ENCODE measurements at regions of chr17 and their contacts with region 1.

Region 1: DNA sequence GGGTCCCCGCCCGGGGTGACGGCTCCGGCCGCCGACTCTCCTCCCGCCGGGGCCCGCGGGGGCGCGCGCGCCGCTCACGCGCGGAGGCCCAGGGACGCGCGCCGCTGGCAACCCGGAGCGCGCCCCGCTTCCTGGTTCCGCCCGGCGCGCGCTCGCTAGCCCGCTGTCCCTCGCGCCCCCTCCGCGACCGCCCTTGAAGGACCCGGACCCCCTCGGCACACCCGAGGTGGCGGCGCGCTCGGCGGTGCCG is at the start of gene STAT5B:
- DNase-seq: peak; percentile 68
- ATAC-seq: peak; percentile 57; the same call in 1 of the 2 replicates
- H3K4me3 Mint-ChIP-seq: peak within 1 kb of the TSS; percentile 86
- H3K27ac Mint-ChIP-seq: peak within 1 kb of the TSS; percentile 72
- H3K4me1 Mint-ChIP-seq: peaks cover 50% of the 10 kb centered on the region
- H3K27me3 Mint-ChIP-seq: peaks cover 6% of the 10 kb centered on the region
- CTCF ChIP-seq: no peak
- total RNA-seq, gene STAT5B: 36.4 to 42.2 TPM (median 37.9 TPM) in 3 replicates

Region 2: DNA sequence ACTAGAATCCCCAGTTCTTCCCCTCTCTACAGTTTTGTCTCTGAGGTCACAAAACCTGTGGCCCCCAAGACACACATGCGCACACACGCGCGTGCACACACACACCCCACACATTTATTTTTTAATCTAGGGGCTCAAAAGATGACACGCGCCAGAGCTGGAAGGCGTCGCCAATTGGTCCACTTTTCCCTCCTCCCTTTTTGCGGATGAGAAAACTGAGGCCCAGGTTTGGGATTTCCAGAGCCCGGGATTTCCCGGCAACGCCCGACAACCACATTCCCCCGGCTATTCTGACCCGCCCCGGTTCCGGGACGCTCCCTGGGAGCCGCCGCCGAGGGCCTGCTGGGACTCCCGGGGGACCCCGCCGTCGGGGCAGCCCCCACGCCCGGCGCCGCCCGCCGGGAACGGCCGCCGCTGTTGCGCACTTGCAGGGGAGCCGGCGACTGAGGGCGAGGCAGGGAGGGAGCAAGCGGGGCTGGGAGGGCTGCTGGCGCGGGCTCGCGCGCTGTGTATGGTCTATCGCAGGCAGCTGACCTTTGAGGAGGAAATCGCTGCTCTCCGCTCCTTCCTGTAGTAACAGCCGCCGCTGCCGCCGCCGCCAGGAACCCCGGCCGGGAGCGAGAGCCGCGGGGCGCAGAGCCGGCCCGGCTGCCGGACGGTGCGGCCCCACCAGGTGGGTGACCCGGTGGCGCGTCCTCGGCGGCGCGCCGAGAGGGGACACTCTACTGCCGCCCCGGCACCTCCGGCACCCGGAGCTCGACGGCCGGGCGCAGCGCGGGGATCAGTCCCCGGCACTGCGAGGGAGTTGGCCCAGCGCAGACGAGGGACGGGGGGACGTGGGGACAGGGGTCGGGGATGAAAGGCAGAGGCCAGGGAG is 11.9 kb after region 1 on chr17 and contains the start of gene STAT5A:
- CTCF ChIA-PET with region 1: interaction called, 13 read pairs
- POLR2A ChIA-PET with region 1: interaction called, 3 read pairs
- DNase-seq: peak; percentile 71
- ATAC-seq: peak; percentile 79
- H3K4me3 Mint-ChIP-seq: peak within 1 kb of the TSS; percentile 70
- H3K27ac Mint-ChIP-seq: peak within 1 kb of the TSS; percentile 60; the same call in 1 of the 2 replicates
- H3K4me1 Mint-ChIP-seq: peaks cover 16% of the 10 kb centered on the region
- H3K27me3 Mint-ChIP-seq: peaks cover 35% of the 10 kb centered on the region
- CTCF ChIP-seq: no peak
- total RNA-seq, gene STAT5A: 6.6 to 10.9 TPM (median 9.7 TPM) in 3 replicates

Measured in WTC11 (cell line).